CD4-positive, alpha-beta memory T cell (primary cell): ENCODE measurements at regions of chr1 and their contacts with region 1.

Region 1: DNA sequence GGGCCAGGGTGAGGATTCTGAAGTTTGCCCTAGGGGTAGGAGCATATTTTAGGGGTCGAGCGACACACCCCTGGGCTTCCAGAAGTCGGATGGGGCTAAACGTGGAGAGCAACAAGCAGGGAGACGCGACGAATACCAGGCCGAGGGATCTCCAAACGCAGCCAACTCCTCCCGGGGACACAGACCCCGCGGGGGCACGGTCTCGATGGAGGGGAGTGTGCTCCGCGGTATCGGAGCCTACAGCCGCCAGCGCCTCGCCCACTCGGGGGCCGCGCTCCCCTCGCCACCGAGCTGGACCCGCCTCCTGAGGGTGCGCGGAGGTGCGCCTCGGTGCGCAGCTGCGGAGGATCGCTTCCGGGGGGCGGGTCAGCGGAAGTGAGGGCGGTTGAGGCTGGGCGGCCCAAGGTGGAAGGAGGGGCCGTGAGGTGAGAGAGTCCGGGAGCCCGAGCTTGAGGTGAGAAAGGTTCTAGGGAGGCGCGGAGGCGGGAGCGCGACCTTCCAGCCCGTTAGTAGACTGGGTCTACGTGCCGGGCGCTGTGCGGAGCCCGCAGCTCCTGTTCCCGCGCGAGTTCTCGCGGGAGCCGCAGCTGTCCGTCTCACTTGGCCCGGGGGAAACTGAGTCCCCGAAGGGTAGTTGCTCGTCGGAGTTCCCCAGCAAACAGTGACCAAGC is at the start of gene MTFR1L:
- DNase-seq: peak; percentile 92 to 95 (median 93)
- H3K4me3 ChIP-seq: peak within 1 kb of the TSS; percentile 73 to 94
- H3K4me3 Mint-ChIP-seq: peak within 1 kb of the TSS; percentile 93 to 99 (median 96)
- H3K27ac ChIP-seq: peak within 1 kb of the TSS; percentile 88
- H3K27ac Mint-ChIP-seq: peak within 1 kb of the TSS; percentile 91 to 99 (median 98)
- H3K4me1 ChIP-seq: peaks cover 31% of the 10 kb centered on the region
- H3K4me1 Mint-ChIP-seq: peaks cover 28 to 41% (median 35%) of the 10 kb centered on the region in 4 donors
- H3K27me3 ChIP-seq: no peaks in the 10 kb centered on the region
- H3K27me3 Mint-ChIP-seq: no peaks in the 10 kb centered on the region
- total RNA-seq, gene MTFR1L: 53.3 to 57.2 TPM

Region 2: DNA sequence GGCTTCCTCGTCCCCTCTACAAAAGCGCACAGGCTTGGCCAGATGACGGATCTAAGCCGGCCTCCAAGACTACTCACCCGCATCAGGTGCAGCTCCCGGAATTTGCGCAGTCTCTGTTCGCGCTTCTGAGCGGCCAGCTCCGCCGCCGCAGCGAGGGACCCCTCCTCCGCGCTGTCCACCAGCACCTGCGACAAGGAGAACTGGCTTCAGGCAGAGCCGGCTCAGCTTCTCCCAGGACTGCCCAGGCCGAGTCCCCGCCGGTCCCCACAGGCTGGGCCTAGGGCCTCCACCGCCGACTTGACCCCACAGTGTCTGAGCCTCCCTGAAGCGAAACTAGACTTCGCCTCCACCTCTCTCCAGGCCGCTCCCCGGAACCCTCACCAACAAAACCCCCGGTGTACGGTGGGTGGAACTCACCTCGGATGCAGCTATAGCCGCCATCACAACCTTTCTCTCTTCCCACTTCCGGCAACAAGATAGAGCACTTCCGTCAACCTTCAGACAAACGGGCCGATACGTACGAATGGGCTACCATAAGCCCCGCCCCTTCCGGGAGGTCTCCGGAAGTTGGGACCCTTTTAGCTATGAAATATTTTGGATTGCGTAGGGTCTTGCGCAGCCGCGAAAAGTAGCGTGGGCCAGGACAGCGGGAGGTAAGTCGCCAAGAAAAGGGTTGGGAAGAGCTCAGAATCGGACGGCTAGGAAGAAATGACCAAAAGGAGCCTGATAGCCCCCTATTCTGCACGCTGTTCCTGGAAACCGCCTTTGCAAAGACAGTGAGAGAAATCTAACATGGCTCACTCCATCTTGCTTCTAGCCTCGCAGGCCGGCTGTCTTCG is 587.5 kb before region 1 on chr1 and contains the start of gene SYF2:
- CTCF ChIA-PET with region 1: no interaction called
- POLR2A ChIA-PET with region 1: interaction called, 15 read pairs
- intact Hi-C with region 1: no loop called
- DNase-seq: peak; percentile 88 to 95 (median 91)
- H3K4me3 ChIP-seq: peak within 1 kb of the TSS; percentile 80 to 83
- H3K4me3 Mint-ChIP-seq: no peak within 1 kb of the TSS
- H3K27ac ChIP-seq: peak within 1 kb of the TSS; percentile 94
- H3K27ac Mint-ChIP-seq: no peak within 1 kb of the TSS
- H3K4me1 ChIP-seq: peaks cover 27% of the 10 kb centered on the region
- H3K4me1 Mint-ChIP-seq: peaks cover 13 to 26% (median 15%) of the 10 kb centered on the region in 4 donors
- H3K27me3 ChIP-seq: no peaks in the 10 kb centered on the region
- H3K27me3 Mint-ChIP-seq: no peaks in the 10 kb centered on the region
- total RNA-seq, gene SYF2: 64.3 to 66.8 TPM

Region 3: DNA sequence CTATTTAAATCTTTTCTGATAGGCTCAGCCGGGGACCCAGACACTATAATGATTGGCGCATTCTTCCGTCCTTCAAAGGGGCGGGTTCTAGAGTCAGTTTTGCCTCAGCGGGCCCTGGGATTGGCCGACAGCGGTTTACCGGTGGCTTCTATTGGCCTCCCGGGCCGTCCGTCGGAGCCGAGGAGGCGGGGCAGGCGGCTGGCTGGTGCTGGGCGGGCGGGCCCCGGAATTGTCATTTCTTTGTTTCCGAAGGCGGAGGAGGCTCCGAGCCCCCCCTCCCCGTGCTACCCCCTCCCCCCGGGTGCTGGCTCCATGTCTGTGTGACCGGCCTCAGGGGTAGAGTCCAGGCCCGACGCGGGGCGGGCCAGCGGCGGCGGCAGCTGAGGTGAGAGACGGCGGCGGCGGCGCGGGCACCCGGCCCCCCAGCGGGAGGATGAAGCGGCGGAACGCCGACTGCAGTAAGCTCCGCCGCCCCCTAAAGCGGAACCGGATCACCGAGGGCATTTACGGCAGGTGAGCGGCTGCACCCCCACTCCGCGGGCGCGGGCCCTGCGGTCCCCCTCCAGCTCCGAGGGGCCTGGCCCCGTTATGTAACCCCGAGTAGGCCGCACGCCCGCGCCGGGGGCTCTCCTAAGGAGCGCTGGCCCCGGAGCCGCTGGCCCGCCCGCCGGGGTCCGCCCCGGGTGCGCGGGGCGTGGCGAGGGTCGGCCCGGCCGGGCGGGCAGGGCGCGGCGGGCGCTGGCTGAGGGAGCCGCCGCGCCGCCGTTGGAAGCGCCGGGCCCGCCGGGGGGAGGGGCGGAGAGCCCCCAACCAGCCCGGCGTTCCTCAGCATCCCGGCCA is 388.8 kb before region 1 on chr1 and contains the start of gene MACO1:
- CTCF ChIA-PET with region 1: no interaction called
- POLR2A ChIA-PET with region 1: interaction called, 7 read pairs
- intact Hi-C with region 1: loop called (anchors 2 kb)
- DNase-seq: peak; percentile 97 to 99 (median 97)
- H3K4me3 ChIP-seq: peak within 1 kb of the TSS; percentile 49 to 92
- H3K4me3 Mint-ChIP-seq: peak within 1 kb of the TSS; percentile 95 to 99 (median 97)
- H3K27ac ChIP-seq: peak within 1 kb of the TSS; percentile 95
- H3K27ac Mint-ChIP-seq: peak within 1 kb of the TSS; percentile 98 to 100 (median 100)
- H3K4me1 ChIP-seq: peaks cover 49% of the 10 kb centered on the region
- H3K4me1 Mint-ChIP-seq: peaks cover 40 to 56% (median 48%) of the 10 kb centered on the region in 4 donors
- H3K27me3 ChIP-seq: no peaks in the 10 kb centered on the region
- H3K27me3 Mint-ChIP-seq: no peaks in the 10 kb centered on the region
- total RNA-seq, gene MACO1: 20.6 TPM

Region 4: DNA sequence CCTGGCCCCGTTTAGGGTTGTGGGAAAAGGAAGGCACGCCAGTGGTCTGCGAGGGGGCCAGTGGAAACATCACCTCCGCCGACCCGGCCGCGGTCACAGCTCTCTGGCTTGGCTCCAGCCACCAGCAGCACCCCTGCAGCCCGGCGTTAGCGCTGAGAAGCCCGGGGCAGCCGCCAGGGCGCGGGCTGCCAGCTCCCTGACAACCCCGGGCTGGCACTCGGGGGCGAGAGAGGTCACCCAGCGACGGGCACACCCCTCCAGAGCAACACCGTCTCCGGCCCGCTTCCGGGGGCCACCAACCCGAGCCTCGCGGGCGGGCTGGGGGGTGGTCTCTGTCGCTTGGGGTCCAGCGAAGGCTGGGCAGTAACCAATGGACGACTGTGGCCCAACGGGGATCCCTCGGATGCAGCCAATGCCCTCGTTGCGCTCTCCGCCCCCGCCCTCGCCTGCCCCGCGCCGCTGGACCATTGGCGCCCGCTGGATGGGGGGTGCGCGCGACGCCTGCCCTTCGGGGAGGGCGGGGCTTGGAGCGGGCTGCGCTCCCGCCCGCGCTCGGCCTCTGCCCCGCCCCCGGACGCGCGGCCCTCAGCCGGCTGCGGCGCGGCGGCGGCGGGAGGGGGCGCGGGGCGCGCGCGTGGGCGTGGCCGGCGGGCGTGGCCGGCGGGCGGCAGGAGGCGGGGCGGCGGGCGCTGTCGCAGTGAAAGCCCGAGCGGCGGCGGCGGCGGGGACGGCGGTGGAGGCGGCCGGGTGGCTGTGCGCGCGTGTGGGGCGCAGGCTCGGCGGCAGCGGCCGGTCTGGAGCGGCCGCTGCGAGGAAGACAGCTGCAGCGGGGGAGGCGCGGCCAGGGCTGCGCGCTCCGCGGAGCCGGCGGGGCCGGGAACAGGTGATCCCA is 203.4 kb before region 1 on chr1 and contains the start of gene MAN1C1:
- CTCF ChIA-PET with region 1: interaction called, 3 read pairs
- POLR2A ChIA-PET with region 1: interaction called, 13 read pairs
- intact Hi-C with region 1: no loop called
- DNase-seq: peak; percentile 77 to 87 (median 85)
- H3K4me3 ChIP-seq: peak within 1 kb of the TSS in 1 of 2 donors; percentile 71
- H3K4me3 Mint-ChIP-seq: peak within 1 kb of the TSS; percentile 64 to 85 (median 78)
- H3K27ac ChIP-seq: peak within 1 kb of the TSS; percentile 65
- H3K27ac Mint-ChIP-seq: peak within 1 kb of the TSS; percentile 43 to 86 (median 75)
- H3K4me1 ChIP-seq: peaks cover 58% of the 10 kb centered on the region
- H3K4me1 Mint-ChIP-seq: peaks cover 48 to 53% (median 49%) of the 10 kb centered on the region in 4 donors
- H3K27me3 ChIP-seq: no peaks in the 10 kb centered on the region
- H3K27me3 Mint-ChIP-seq: no peaks in the 10 kb centered on the region
- total RNA-seq, gene MAN1C1: 42.6 to 45.1 TPM

Region 5: DNA sequence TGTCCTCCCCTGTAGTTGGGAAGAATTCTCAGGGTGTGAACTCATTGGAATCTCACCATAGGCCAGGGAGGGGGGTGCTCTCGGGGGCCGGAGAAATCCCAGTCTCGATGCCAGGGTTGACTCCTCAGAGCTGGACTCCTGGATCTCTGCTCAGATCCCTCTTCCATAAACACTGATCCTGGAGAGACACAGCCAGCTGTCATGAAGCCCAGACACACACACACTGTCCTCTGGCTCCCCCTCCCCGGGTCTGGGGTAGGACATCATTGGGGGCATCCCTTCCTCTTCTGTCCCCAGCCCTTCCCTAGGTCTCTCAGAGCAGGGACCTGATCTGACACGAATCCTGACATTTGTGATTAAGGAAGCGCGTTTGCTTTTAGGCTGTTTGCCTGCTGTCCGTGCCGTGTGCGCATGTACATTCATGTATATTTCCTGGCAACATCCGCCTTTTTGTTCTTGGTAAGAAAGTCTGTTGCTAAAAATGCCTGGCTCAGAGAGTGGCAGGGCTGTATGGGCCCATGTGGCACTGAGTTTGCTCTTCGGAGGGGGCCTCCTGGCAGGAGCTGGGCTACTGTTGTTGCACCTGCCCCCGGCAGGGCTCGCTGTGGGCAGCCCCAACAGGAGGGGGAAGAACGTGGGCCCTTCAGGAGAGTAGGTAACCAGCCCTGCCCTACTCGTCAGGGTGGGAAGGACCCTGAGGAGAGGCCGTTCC is 65.1 kb before region 1 on chr1:
- CTCF ChIA-PET with region 1: no interaction called
- POLR2A ChIA-PET with region 1: no interaction called
- intact Hi-C with region 1: no loop called
- DNase-seq: no peak
- H3K4me3 ChIP-seq: no peak overlapping the region
- H3K4me3 Mint-ChIP-seq: peak overlapping the region in 4 of 8 donors; percentile 15 to 41 (median 37)
- H3K27ac ChIP-seq: no peak overlapping the region
- H3K27ac Mint-ChIP-seq: peak overlapping the region; percentile 46 to 84 (median 68)
- H3K4me1 ChIP-seq: peaks cover 18% of the 10 kb centered on the region
- H3K4me1 Mint-ChIP-seq: peaks cover 21 to 49% (median 22%) of the 10 kb centered on the region in 4 donors
- H3K27me3 ChIP-seq: no peaks in the 10 kb centered on the region
- H3K27me3 Mint-ChIP-seq: no peaks in the 10 kb centered on the region

Region 6: GRCh38 chr1:25796811-25797458 is 22.8 kb before region 1 on chr1:
- CTCF ChIA-PET with region 1: interaction called, 4 read pairs
- POLR2A ChIA-PET with region 1: interaction called, 19 read pairs
- intact Hi-C with region 1: no loop called
- DNase-seq: peak; percentile 78 to 87 (median 81)
- H3K4me3 ChIP-seq: peak overlapping the region in 1 of 2 donors; percentile 44
- H3K4me3 Mint-ChIP-seq: peak overlapping the region; percentile 58 to 88 (median 80)
- H3K27ac ChIP-seq: peak overlapping the region; percentile 45
- H3K27ac Mint-ChIP-seq: peak overlapping the region; percentile 86 to 98 (median 95)
- H3K4me1 ChIP-seq: peaks cover 54% of the 10 kb centered on the region
- H3K4me1 Mint-ChIP-seq: peaks cover 32 to 66% (median 49%) of the 10 kb centered on the region in 4 donors
- H3K27me3 ChIP-seq: no peaks in the 10 kb centered on the region
- H3K27me3 Mint-ChIP-seq: peaks cover 0 to 2% of the 10 kb centered on the region in 2 donors

Region 7: DNA sequence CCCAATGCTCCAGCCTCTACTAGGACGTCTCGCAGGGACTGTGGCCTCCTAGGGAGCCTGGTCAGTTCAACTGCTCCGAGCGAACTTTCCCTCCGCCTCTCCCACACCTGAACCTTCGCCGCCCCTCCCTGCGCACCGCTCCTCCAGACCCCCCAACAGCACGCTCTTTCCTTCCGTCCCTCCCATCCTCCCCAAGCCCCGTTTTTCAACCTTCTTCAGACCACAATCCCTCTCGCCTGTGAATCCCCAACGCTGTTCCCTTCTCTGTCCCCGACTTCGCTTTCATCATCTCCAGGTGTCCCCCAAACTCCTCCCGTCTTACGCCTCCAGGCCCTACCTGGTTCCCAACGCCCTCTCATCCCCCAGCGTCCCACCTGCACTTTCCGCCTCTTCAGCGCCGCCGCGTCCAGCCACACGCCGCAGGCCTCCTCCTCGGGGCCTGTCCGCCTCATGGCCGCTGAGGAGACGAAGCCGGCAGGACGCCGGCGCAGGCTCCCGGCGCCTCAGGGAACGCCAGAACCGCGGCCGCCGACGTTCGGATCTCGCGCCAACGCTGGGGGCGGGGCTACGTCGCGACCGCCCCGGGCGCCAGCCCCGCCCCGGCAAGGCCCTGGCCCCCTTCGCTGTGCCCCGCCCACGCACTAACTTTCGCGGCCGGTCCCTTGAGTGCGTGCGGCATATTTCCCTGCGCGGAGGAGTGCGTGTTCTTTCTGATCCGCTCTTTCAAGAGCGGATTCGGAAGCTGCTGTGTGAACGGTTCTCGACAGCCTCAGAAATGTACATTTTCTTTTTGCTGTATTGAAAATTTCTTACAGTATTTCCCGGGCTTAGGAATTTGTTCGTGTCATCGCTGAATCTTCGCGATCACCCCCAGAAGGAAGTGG is 39.4 kb after region 1 on chr1 and contains the start of gene AUNIP:
- CTCF ChIA-PET with region 1: no interaction called
- POLR2A ChIA-PET with region 1: interaction called, 28 read pairs
- intact Hi-C with region 1: loop called (anchors 1 kb)
- DNase-seq: peak; percentile 88 to 89 (median 89)
- H3K4me3 ChIP-seq: peak within 1 kb of the TSS; percentile 56 to 71
- H3K4me3 Mint-ChIP-seq: peak within 1 kb of the TSS; percentile 87 to 95 (median 92)
- H3K27ac ChIP-seq: peak within 1 kb of the TSS; percentile 80
- H3K27ac Mint-ChIP-seq: peak within 1 kb of the TSS; percentile 92 to 98 (median 94)
- H3K4me1 ChIP-seq: peaks cover 16% of the 10 kb centered on the region
- H3K4me1 Mint-ChIP-seq: peaks cover 9 to 24% (median 14%) of the 10 kb centered on the region in 4 donors
- H3K27me3 ChIP-seq: no peaks in the 10 kb centered on the region
- H3K27me3 Mint-ChIP-seq: no peaks in the 10 kb centered on the region
- total RNA-seq, gene AUNIP: not detected

Region 8: DNA sequence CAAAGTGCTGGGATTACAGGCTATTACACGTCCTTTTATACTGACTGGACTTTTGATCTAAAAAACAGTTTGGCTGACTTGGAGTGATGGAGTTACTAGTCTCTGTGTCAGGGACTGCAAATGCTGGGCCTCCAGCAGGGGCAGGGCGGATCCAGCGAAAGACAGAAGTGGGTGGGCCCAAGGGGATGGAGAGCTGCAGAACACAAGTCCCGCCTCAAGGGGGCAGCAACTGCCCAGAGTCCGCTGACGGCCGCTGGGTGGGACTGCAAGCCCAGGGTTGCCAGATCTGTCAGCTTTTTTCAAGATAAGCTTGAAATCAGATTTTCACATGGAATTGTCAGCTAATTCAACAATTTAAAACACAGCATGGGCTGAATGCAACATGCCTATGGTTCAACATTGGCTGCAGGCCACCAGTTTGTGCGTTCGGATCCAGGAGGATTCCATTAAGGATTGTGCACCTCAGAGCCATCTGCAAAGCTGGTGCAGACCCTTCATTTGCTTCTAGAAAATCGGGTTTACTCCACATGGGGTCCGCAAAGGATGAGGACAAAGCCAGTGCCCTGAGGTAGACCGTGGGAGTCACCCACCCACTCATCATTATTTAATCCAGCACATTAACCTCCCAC is 75.8 kb after region 1 on chr1:
- CTCF ChIA-PET with region 1: interaction called, 11 read pairs
- POLR2A ChIA-PET with region 1: interaction called, 5 read pairs
- intact Hi-C with region 1: no loop called
- DNase-seq: peak; percentile 89 to 92 (median 91)
- H3K4me3 ChIP-seq: no peak overlapping the region
- H3K4me3 Mint-ChIP-seq: peak overlapping the region in 1 of 8 donors; percentile 23
- H3K27ac ChIP-seq: no peak overlapping the region
- H3K27ac Mint-ChIP-seq: peak overlapping the region in 6 of 7 donors; percentile 4 to 73 (median 58)
- H3K4me1 ChIP-seq: peaks cover 10% of the 10 kb centered on the region
- H3K4me1 Mint-ChIP-seq: peaks cover 4 to 9% (median 7%) of the 10 kb centered on the region in 4 donors
- H3K27me3 ChIP-seq: no peaks in the 10 kb centered on the region
- H3K27me3 Mint-ChIP-seq: no peaks in the 10 kb centered on the region